ENCODE measurements at regions of chr3 and their contacts with region 1.

Region 1: DNA sequence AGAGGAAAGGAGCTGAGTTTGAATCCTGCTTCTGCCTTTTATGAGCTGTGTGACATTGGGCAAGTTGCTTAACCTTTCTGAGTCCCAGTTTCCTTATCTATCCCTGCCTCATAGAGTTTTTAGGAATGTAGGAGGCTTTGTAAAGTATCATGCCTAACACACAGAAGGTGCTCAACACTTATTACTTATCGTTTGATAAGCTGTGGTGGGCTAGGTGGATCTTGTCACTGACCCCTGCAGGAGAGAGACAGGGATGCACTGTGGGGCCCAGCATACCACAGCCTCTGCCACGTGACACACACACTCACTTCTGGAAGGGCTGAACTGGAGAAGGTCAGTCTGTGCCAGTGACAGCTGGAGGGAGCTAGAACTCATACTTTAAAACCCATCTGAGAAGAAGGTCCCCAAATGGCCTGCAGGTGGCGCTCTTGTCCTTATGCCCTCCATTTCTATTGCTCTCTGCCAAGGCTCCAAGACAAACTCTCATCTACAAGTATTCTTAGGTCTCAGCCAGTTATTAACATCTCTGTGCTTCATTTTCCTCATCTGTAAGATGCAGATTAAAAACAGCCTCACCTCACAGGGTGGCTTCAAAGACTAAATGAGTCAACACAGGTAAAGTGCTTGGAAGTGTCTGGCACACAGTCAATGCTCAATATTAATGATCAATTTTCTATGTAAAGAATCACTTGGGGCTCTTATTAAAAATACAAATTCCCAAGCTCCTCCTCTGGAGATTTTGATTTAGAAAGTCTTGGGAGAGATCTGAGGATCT is 57.5 kb upstream of the HACD2 start:
- DNase-seq: peak; percentile 85
- H3K4me3 Mint-ChIP-seq: no peak overlapping the region
- H3K27ac Mint-ChIP-seq: no peak overlapping the region
- H3K4me1 Mint-ChIP-seq: no peaks in the 10 kb centered on the region
- H3K27me3 Mint-ChIP-seq: peaks cover 2% of the 10 kb centered on the region

Region 2: GRCh38 chr3:123723522-123724168 is 81.3 kb after region 1 on chr3:
- intact Hi-C with region 1: loop called (anchors 1 kb)
- DNase-seq: peak; percentile 86
- H3K4me3 Mint-ChIP-seq: no peak overlapping the region
- H3K27ac Mint-ChIP-seq: peak overlapping the region; percentile 47
- H3K4me1 Mint-ChIP-seq: peaks cover 2% of the 10 kb centered on the region
- H3K27me3 Mint-ChIP-seq: peaks cover 6% of the 10 kb centered on the region